Caco-2 (cell line): ENCODE measurements at regions of chr17 and their contacts with region 1.

Region 1: DNA sequence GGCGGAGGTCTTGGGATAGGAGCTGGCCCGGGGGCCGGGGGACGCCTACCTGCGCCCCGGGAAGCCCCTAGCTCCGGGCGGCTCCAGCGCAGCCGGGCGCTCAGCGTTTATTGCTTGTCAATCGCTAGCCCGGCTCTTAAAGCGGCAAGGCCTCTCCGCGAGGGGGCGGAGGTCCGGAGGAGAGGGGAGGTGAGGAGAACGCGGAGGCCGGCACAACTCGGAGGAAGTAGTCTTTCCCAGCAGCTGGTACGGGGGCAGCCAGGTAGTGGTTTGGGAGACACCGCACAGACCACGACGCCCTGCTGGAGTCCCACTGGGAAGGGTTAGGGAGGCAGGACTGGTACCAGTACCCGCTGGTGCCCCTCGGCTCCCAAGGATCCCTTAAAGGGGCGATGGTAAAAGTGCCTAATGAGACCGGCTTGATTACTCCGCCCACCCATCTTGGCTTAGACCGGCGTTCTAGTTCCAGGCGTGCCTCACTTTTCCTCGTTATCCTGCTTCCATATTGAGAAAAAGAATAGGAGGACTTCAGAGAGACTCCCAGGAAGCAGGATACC is at the start of gene MPP2:
- DNase-seq: peak; percentile 74 to 81
- H3K4me3 ChIP-seq: peak within 1 kb of the TSS; percentile 55
- H3K4me3 Mint-ChIP-seq: peak within 1 kb of the TSS; percentile 80
- H3K27ac Mint-ChIP-seq: no peak within 1 kb of the TSS
- H3K4me1 ChIP-seq: peaks cover 21% of the 10 kb centered on the region
- H3K4me1 Mint-ChIP-seq: no peaks in the 10 kb centered on the region
- H3K27me3 ChIP-seq: no peaks in the 10 kb centered on the region
- H3K27me3 Mint-ChIP-seq: peaks cover 15% of the 10 kb centered on the region
- CTCF ChIP-seq: peak; percentile 25 to 34
- total RNA-seq, gene MPP2: 5.2 and 5.6 TPM in 2 replicates

Region 2: GRCh38 chr17:42472709-42473521 is 1434.6 kb before region 1 on chr17:
- CTCF ChIA-PET with region 1: no interaction called
- POLR2A ChIA-PET with region 1: interaction called, 13 read pairs
- intact Hi-C with region 1: no loop called
- DNase-seq: no peak
- H3K4me3 ChIP-seq: no peak overlapping the region
- H3K4me3 Mint-ChIP-seq: no peak overlapping the region
- H3K27ac Mint-ChIP-seq: no peak overlapping the region
- H3K4me1 ChIP-seq: peaks cover 21% of the 10 kb centered on the region
- H3K4me1 Mint-ChIP-seq: peaks cover 22% of the 10 kb centered on the region
- H3K27me3 ChIP-seq: no peaks in the 10 kb centered on the region
- H3K27me3 Mint-ChIP-seq: no peaks in the 10 kb centered on the region
- CTCF ChIP-seq: no peak

Region 3: DNA sequence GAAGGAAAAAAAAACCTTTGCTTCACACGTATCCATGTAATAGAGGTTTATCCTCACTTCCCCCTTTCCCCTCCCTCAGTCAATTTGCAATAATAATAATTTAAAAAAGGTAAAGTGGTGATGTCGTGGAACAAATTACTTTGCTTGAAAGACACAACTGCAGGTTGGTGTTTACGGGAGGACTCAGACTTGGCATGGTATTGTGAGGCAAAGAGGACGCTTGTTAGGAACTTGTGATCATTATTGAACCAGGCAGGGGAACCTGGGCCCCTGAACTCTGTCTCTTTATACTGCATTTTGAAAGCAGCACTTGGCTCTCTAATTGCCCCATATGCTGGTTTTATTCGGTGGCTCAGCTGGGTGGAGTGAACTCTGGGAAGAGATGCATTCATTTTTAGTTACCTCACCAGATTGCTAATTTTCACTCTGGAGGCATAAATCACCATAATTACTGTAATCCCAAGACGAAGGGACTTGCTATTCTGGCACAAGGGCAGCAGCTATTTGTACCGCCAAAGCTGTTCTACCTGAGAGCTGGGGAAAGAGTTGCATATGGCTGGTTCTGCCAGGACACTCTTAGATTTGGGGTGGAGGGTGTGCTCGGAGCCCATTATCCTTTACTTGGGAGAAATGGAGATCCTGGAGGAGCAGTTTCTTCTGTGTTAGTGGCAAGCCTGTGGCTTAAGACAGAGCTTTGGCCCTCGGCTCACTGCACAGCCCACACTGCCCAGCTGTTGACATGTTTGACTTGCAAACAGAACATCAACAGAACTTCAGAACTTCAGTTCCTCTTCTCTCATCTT is 429.5 kb before region 1 on chr17:
- CTCF ChIA-PET with region 1: no interaction called
- POLR2A ChIA-PET with region 1: no interaction called
- intact Hi-C with region 1: loop called (anchors 5 kb)
- DNase-seq: no peak
- H3K4me3 ChIP-seq: no peak overlapping the region
- H3K4me3 Mint-ChIP-seq: no peak overlapping the region
- H3K27ac Mint-ChIP-seq: no peak overlapping the region
- H3K4me1 ChIP-seq: peaks cover 12% of the 10 kb centered on the region
- H3K4me1 Mint-ChIP-seq: peaks cover 6% of the 10 kb centered on the region
- H3K27me3 ChIP-seq: no peaks in the 10 kb centered on the region
- H3K27me3 Mint-ChIP-seq: no peaks in the 10 kb centered on the region
- CTCF ChIP-seq: no peak

Region 4: GRCh38 chr17:43878260-43879175 is 29.0 kb before region 1 on chr17:
- CTCF ChIA-PET with region 1: interaction called, 5 read pairs
- POLR2A ChIA-PET with region 1: no interaction called
- intact Hi-C with region 1: loop called (anchors 5 kb)
- DNase-seq: peak; percentile 81 to 89
- H3K4me3 ChIP-seq: no peak overlapping the region
- H3K4me3 Mint-ChIP-seq: no peak overlapping the region
- H3K27ac Mint-ChIP-seq: peak overlapping the region; percentile 45
- H3K4me1 ChIP-seq: peaks cover 10% of the 10 kb centered on the region
- H3K4me1 Mint-ChIP-seq: peaks cover 8% of the 10 kb centered on the region
- H3K27me3 ChIP-seq: no peaks in the 10 kb centered on the region
- H3K27me3 Mint-ChIP-seq: no peaks in the 10 kb centered on the region
- CTCF ChIP-seq: peak; percentile 98 to 99

Region 5: DNA sequence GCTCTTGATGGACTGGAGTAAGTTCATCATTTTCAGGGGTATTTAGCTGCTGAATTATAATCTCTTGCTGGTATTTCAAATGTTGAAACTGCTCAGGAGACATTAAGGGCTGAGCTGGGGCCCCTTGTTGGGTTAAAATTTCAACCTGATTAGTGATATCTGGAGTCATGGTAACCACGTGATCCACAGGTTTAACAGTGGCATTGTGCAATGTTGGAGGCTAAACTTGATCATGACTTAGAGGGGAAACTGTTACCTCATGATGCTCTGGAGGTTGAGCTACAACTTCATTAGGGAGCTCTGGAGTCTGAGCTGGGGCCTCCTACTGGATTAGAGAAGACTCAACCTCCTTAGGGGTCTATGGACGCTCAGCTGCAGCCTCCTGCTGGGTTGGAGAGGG is 17.1 kb after region 1 on chr17:
- CTCF ChIA-PET with region 1: interaction called, 15 read pairs
- POLR2A ChIA-PET with region 1: no interaction called
- intact Hi-C with region 1: no loop called
- DNase-seq: no peak
- H3K4me3 ChIP-seq: no peak overlapping the region
- H3K4me3 Mint-ChIP-seq: no peak overlapping the region
- H3K27ac Mint-ChIP-seq: no peak overlapping the region
- H3K4me1 ChIP-seq: 0 out of 2 replicates have a peak, but pooled peaks cover 3% of the 10 kb centered on the region
- H3K4me1 Mint-ChIP-seq: no peaks in the 10 kb centered on the region
- H3K27me3 ChIP-seq: no peaks in the 10 kb centered on the region
- H3K27me3 Mint-ChIP-seq: no peaks in the 10 kb centered on the region
- CTCF ChIP-seq: no peak

Region 6: DNA sequence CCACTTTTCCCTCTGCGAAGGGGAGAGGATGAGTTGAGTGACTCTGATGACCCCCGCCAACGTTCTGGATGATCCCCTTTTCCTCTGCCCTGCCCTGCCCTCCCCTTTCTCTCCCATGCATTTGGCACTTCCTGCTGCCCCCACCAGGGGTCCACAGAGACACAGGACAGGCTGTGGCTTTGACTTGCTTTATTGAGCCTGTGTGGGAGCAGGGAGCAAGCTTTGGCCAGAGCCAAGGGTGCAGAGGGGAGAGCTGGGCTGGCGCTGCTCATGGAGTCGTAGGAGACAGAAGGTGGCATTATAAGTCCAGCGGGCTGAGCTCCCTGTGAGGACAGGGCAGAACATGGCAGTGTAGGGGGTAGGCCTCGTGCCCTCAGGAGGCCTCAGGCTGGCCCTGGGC is 33.1 kb after region 1 on chr17:
- CTCF ChIA-PET with region 1: interaction called, 16 read pairs
- POLR2A ChIA-PET with region 1: no interaction called
- intact Hi-C with region 1: loop called (anchors 1 kb)
- DNase-seq: peak; percentile 78 to 83
- H3K4me3 ChIP-seq: no peak overlapping the region
- H3K4me3 Mint-ChIP-seq: no peak overlapping the region
- H3K27ac Mint-ChIP-seq: no peak overlapping the region
- H3K4me1 ChIP-seq: peaks cover 15% of the 10 kb centered on the region
- H3K4me1 Mint-ChIP-seq: peaks cover 17% of the 10 kb centered on the region
- H3K27me3 ChIP-seq: no peaks in the 10 kb centered on the region
- H3K27me3 Mint-ChIP-seq: peaks cover 6% of the 10 kb centered on the region
- CTCF ChIP-seq: peak; percentile 87 to 88